ENCODE measurements at regions of chr10 and their contacts with region 1.

Region 1: DNA sequence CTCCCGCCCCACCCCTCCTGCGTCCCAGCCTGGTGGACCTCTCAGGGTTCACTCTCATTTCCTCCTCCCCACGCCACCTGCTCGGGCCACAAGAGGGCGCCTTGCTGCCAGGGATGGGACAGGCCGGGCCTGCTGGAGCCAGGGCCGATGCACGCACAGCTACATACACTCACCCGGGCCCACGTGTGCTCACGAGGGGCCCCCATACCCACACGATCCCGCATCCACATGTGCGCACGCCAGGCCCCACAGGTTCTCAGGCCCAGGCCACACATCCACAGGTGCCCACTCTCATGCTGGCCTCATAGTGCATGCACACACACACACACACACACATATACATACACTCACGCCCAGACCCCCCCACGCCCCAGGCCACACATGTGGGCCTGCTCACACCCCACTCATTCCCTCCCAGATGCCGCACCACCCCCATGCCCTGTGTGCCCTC is 68.6 kb downstream of the LHPP start:
- DNase-seq: peak; percentile 85
- H3K4me3 Mint-ChIP-seq: no peak overlapping the region
- H3K27ac Mint-ChIP-seq: no peak overlapping the region
- H3K4me1 Mint-ChIP-seq: peaks cover 2% of the 10 kb centered on the region
- H3K27me3 Mint-ChIP-seq: no peaks in the 10 kb centered on the region
- CTCF ChIP-seq: peak; percentile 61

Region 2: GRCh38 chr10:124394583-124394982 is 135.7 kb before region 1 on chr10:
- CTCF ChIA-PET with region 1: no interaction called
- intact Hi-C with region 1: no loop called
- DNase-seq: no peak
- H3K4me3 Mint-ChIP-seq: no peak overlapping the region
- H3K27ac Mint-ChIP-seq: no peak overlapping the region
- H3K4me1 Mint-ChIP-seq: peaks cover 11% of the 10 kb centered on the region
- H3K27me3 Mint-ChIP-seq: no peaks in the 10 kb centered on the region
- CTCF ChIP-seq: no peak

Region 3: GRCh38 chr10:124611738-124612137 is 81.5 kb after region 1 on chr10:
- CTCF ChIA-PET with region 1: no interaction called
- intact Hi-C with region 1: no loop called
- DNase-seq: no peak
- H3K4me3 Mint-ChIP-seq: no peak overlapping the region
- H3K27ac Mint-ChIP-seq: no peak overlapping the region
- H3K4me1 Mint-ChIP-seq: no peaks in the 10 kb centered on the region
- H3K27me3 Mint-ChIP-seq: no peaks in the 10 kb centered on the region
- CTCF ChIP-seq: no peak

Region 4: DNA sequence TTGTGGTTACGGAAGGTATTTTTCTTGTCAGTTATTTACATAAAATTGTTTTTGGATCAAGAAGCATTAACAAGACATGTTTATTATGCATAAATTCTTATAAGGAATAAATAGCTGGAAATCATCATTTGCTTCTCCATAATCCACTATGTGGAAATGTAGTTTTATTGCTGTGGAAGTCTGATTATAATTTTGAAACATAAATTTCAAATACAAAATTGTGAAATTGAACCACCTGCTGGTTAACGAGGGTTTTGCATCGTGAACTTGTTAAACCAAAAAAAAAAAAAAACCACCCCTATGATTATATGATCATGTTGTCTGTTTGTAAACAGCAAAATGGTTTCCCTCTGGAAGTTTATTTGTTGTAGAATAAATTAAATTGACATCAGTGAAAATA is 297.2 kb after region 1 on chr10:
- CTCF ChIA-PET with region 1: no interaction called
- intact Hi-C with region 1: loop called (anchors 5 kb)
- DNase-seq: peak; percentile 4
- H3K4me3 Mint-ChIP-seq: no peak overlapping the region
- H3K27ac Mint-ChIP-seq: no peak overlapping the region
- H3K4me1 Mint-ChIP-seq: no peaks in the 10 kb centered on the region
- H3K27me3 Mint-ChIP-seq: no peaks in the 10 kb centered on the region
- CTCF ChIP-seq: peak; percentile 5

Measured in Calu3 (cell line).